ENCODE measurements at regions of chr11 and their contacts with region 1.

Region 1: GRCh38 chr11:73184953-73185671 is 33.0 kb upstream of the P2RY2 start:
- H3K4me3 Mint-ChIP-seq: peak overlapping the region; percentile 60
- H3K27ac Mint-ChIP-seq: peak overlapping the region; percentile 63
- H3K4me1 Mint-ChIP-seq: peaks cover 57% of the 10 kb centered on the region
- H3K27me3 Mint-ChIP-seq: peaks cover 1% of the 10 kb centered on the region

Region 2: GRCh38 chr11:73152861-73153483 is 32.1 kb before region 1 on chr11:
- intact Hi-C with region 1: no loop called
- H3K4me3 Mint-ChIP-seq: no peak overlapping the region
- H3K27ac Mint-ChIP-seq: peak overlapping the region; percentile 77
- H3K4me1 Mint-ChIP-seq: peaks cover 79% of the 10 kb centered on the region
- H3K27me3 Mint-ChIP-seq: no peaks in the 10 kb centered on the region

Region 3: DNA sequence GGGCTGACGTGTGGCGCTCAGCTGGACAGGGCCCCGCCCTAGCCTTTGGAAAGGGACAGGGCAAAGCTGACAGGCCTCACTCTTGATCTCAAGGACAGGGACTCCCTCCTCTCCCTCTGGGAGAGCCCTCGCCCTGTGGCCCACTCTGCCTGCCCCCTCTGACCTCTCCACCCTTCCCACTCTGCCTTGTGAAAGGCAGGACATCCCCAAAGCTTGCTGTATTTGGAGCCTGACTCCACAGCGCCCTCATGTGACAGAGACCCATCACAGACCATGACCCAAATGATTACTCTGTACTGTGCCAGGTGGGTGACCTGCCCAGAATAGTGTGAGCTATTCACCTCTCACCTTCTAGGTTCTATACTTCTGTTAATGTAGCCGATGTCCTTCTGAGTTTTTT is 51.7 kb after region 1 on chr11:
- intact Hi-C with region 1: loop called (anchors 1 kb)
- H3K4me3 Mint-ChIP-seq: no peak overlapping the region
- H3K27ac Mint-ChIP-seq: no peak overlapping the region
- H3K4me1 Mint-ChIP-seq: peaks cover 38% of the 10 kb centered on the region
- H3K27me3 Mint-ChIP-seq: no peaks in the 10 kb centered on the region

Region 4: GRCh38 chr11:73478738-73479347 is 293.7 kb after region 1 on chr11:
- intact Hi-C with region 1: no loop called
- H3K4me3 Mint-ChIP-seq: no peak overlapping the region
- H3K27ac Mint-ChIP-seq: no peak overlapping the region
- H3K4me1 Mint-ChIP-seq: peaks cover 18% of the 10 kb centered on the region
- H3K27me3 Mint-ChIP-seq: no peaks in the 10 kb centered on the region

Measured in dendritic cell treated with granulocyte-macrophage colony-stimulating factor and Interleukin-4, amounts not matched to agents 40 ng/mL and 50 ng/mL, for 4 days (primary cell).